Activated CD4-positive, alpha-beta T cell treated with anti-CD3 and anti-CD28 coated beads for 36 hours (primary cell): ENCODE measurements at regions of chr10 and their contacts with region 1.

Region 1: DNA sequence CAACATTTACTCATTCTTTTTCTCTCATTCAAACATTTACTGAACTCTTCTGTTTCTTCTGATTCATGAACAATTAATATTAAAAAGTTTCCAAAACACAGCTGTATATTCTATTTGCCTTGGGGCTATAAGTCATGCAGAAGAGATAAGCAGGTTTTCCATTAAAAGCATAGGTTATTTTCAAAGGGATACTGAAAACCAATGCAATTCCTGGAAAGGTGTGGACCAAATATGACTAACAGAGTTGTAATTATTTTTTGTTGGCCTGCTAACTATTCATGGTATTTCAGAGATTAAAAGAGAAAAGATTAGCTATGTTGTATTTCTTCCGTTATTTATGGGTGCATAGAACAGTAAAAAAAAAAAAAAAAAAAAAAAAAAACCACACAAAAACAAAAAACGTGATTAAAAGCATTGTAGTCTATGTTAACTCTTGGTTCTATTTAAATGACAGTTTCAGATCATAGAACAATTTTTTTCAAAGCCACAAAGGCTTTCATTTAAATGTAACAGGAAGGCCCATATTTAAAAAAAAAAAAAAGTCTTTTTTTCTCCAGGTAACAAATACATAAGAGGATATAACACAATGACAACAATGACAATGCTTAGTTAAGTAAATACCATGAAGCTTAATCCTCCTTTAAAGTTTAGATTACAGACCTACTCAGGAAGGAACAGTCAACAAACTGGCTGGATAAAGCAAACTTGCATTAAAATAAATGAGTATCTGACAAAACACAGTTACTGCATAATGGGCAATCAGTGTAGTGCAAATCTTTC is 1042.9 kb downstream of the GATA3 start:
- DNase-seq: no peak
- ATAC-seq: no peak
- H3K4me3 Mint-ChIP-seq: no peak overlapping the region
- H3K27ac Mint-ChIP-seq: no peak overlapping the region
- H3K4me1 Mint-ChIP-seq: peaks cover 46% of the 10 kb centered on the region
- H3K27me3 Mint-ChIP-seq: peaks cover 3% of the 10 kb centered on the region

Region 2: DNA sequence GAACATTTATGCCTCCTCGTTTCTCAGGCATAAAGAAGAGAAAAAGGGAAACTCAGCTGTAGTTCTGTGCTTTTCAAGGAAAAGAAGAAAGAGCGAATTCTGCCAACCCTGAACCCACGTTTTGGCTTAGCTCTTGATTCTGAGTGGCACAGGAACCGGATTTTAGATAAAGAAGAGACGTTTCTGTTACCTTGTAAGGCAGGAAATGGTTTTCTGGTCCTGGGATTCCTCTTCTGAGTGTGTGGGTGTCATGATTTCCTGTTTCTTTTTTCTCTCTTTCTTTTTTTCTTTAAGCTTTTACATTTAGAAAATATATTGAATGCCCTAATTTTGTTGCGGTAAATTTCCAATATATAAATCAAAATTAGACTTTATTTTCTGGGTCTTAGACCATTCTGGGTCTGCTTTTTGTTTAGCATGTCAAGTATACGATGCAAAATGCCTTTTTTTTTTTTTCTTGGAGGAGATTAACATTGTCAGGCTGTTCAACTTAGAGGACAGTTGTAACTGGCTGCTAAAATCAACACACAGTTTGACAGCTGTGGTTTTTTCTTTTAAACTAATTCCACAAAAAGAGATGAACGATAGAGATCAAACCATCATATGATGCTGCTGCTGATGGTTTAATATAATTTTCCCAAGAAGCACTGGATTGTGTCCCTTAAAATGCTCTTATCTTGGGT is 852.1 kb before region 1 on chr10:
- CTCF ChIA-PET with region 1: no interaction called
- POLR2A ChIA-PET with region 1: no interaction called
- intact Hi-C with region 1: loop called in 1 of 2 experiments (anchors 10 kb)
- DNase-seq: no peak
- ATAC-seq: no peak
- H3K4me3 Mint-ChIP-seq: peak overlapping the region; percentile 48
- H3K27ac Mint-ChIP-seq: peak overlapping the region; percentile 70
- H3K4me1 Mint-ChIP-seq: peaks cover 49% of the 10 kb centered on the region
- H3K27me3 Mint-ChIP-seq: no peaks in the 10 kb centered on the region

Region 3: DNA sequence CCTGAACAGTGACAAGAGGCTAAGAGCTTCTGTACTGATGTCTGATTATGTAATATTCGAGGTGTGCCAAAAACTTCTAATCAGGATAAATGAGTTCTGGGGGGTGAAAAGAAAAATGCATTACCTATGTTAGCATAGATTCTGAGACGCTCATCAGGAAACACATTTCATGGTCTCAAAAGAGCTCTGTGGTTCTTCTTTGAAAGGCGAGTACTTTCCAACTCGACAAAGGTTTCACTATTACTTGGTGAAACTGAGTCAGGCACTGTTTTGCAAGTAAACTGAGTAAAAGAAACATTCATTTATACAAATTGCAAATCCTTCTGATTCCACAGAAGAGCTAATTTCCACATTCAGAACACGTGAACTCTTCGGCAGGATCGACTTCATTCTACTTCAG is 519.7 kb before region 1 on chr10:
- CTCF ChIA-PET with region 1: no interaction called
- POLR2A ChIA-PET with region 1: no interaction called
- intact Hi-C with region 1: loop called (anchors 5 to 10 kb)
- DNase-seq: peak; percentile 12
- ATAC-seq: peak; percentile 71
- H3K4me3 Mint-ChIP-seq: no peak overlapping the region
- H3K27ac Mint-ChIP-seq: peak overlapping the region; percentile 59
- H3K4me1 Mint-ChIP-seq: peaks cover 36% of the 10 kb centered on the region
- H3K27me3 Mint-ChIP-seq: peaks cover 31% of the 10 kb centered on the region

Region 4: GRCh38 chr10:9024210-9024609 is 73.2 kb before region 1 on chr10:
- CTCF ChIA-PET with region 1: no interaction called
- POLR2A ChIA-PET with region 1: no interaction called
- intact Hi-C with region 1: no loop called
- DNase-seq: no peak
- ATAC-seq: peak; percentile 72
- H3K4me3 Mint-ChIP-seq: no peak overlapping the region
- H3K27ac Mint-ChIP-seq: peak overlapping the region; percentile 81
- H3K4me1 Mint-ChIP-seq: peaks cover 47% of the 10 kb centered on the region
- H3K27me3 Mint-ChIP-seq: peaks cover 12% of the 10 kb centered on the region